ENCODE measurements at regions of chr4 and their contacts with region 1.

Region 1: GRCh38 chr4:155809835-155810234 is 51.0 kb downstream of the GUCY1B1 start:
- DNase-seq: no peak
- ATAC-seq: peak; percentile 86 to 90
- H3K4me3 ChIP-seq: no peak overlapping the region
- H3K27ac ChIP-seq: no peak overlapping the region
- H3K4me1 ChIP-seq: no peaks in the 10 kb centered on the region
- H3K27me3 ChIP-seq: no peaks in the 10 kb centered on the region
- CTCF ChIP-seq: peak; percentile 72

Region 2: DNA sequence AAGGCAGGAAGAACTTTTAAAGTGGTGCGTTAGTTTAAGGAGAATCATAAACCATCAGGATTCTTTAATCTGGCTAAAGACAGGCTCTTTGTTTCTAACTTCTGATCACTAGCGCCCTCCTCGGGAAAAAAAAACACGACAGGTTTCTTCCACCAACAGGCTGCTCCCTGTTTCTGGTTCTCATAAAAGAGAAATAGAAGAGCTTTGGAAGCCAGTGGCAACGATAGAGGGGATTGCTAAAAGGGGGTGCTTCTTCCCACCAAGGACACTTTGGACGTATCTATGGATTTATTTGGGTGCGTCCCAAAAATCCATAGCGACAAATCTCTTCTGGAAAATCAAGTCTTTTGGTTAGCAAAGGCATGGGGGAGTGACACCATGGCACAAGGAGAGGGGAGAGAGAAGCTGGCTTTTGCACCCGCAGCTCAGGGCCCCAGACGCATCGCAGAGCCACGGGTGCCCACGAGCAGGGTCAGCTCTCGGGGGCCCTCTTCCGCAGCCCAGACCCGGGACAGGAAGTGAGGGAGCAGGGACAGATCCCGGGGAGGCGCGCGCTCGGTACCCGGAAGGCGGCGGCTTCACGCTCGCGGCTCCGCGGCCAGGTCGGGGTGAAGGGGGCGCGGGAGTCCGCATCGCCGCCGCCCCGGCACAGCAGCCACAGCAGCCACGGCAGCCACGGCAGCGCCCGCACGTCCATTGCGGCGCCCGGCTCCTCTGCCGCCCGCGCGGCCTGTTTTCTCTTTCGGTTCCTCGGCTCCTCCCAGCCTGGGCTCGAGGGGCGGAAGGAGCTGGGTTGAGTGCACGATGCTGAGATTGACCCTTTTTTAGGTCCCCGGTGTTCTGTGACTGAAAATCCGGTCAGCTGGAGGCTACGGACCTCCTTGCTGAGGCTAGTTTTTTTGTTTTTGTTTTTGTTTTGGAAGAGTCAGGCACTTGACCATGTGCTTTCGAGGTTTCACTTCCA is 143.6 kb after region 1 on chr4 and contains the start of gene CTSO:
- intact Hi-C with region 1: loop called (anchors 5 kb)
- DNase-seq: peak; percentile 85
- ATAC-seq: peak; percentile 95 to 97
- H3K4me3 ChIP-seq: peak within 1 kb of the TSS; percentile 69
- H3K27ac ChIP-seq: peak within 1 kb of the TSS; percentile 99
- H3K4me1 ChIP-seq: peaks cover 10% of the 10 kb centered on the region
- H3K27me3 ChIP-seq: no peaks in the 10 kb centered on the region
- CTCF ChIP-seq: peak; percentile 64
- total RNA-seq, gene CTSO: 28.1 TPM

Region 3: DNA sequence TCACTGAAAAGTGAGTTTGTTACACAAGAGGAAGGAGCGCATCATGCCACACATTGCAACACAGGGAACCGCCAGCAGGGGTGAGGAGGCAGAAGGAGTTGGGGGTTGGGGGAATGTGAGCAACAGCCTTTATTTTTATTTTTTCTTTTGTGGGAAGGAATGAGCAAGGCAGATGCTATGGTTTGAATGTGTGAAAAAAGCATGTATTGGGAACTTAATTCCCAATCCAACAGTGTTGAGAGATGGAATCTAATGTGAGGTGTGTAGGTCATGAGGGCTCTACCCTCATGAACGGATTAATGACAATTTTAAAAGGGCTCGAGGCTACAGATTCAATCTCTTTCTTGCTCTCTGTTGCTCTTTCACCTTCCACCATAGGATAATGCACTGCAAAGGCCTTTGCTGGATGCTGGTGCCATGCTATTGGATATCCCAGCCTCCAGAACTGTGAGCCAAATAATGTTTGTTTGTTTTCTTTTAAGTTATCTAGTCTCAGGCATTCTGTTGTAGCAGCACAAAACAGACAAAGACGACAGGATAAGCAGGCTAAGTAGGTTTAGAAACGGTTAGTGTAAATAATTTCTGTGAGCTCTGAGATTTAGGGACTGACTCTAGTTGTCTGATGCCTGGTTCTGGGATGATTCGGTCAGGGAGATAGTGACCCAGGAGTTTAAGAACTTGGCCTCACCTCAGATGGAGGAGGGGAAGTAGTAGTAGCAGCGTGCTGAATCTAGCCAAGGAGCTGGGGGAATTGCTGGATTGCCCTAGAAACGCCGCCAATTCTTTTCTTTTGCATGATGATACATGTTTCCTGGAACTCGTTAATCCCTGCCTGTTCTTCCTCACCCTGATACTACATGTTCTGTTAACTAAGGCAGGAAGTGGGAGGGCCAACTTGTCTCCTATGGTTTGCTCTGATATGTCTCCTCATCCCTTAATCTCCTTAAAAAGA is 300.4 kb after region 1 on chr4:
- intact Hi-C with region 1: no loop called
- DNase-seq: no peak
- ATAC-seq: no peak
- H3K4me3 ChIP-seq: no peak overlapping the region
- H3K27ac ChIP-seq: no peak overlapping the region
- H3K4me1 ChIP-seq: no peaks in the 10 kb centered on the region
- H3K27me3 ChIP-seq: no peaks in the 10 kb centered on the region
- CTCF ChIP-seq: no peak